Activated CD8-positive, alpha-beta T cell treated with anti-CD3 and anti-CD28 coated beads, Interleukin-2, amount 10 ng/mL, durations not matched to agents 7 days and 5 days (primary cell): ENCODE measurements at regions of chr2 and their contacts with region 1.

Region 1: GRCh38 chr2:189762551-189763298 is at the start of gene OSGEPL1:
- DNase-seq: peak; percentile 96
- ATAC-seq: peak; percentile 98
- H3K4me3 Mint-ChIP-seq: peak within 1 kb of the TSS; percentile 93
- H3K27ac Mint-ChIP-seq: peak within 1 kb of the TSS; percentile 98
- H3K4me1 Mint-ChIP-seq: peaks cover 15% of the 10 kb centered on the region
- H3K27me3 Mint-ChIP-seq: no peaks in the 10 kb centered on the region
- total RNA-seq, gene OSGEPL1: 8.0 to 8.5 TPM

Region 2: GRCh38 chr2:189661148-189661956 is 101.4 kb before region 1 on chr2 and contains the start of gene ASNSD1:
- CTCF ChIA-PET with region 1: interaction called, 100 read pairs
- POLR2A ChIA-PET with region 1: interaction called, 20 read pairs
- DNase-seq: peak; percentile 98
- ATAC-seq: peak; percentile 91
- H3K4me3 Mint-ChIP-seq: no peak within 1 kb of the TSS
- H3K27ac Mint-ChIP-seq: no peak within 1 kb of the TSS
- H3K4me1 Mint-ChIP-seq: peaks cover 48% of the 10 kb centered on the region
- H3K27me3 Mint-ChIP-seq: no peaks in the 10 kb centered on the region
- total RNA-seq, gene ASNSD1: 36.9 to 39.4 TPM

Region 3: DNA sequence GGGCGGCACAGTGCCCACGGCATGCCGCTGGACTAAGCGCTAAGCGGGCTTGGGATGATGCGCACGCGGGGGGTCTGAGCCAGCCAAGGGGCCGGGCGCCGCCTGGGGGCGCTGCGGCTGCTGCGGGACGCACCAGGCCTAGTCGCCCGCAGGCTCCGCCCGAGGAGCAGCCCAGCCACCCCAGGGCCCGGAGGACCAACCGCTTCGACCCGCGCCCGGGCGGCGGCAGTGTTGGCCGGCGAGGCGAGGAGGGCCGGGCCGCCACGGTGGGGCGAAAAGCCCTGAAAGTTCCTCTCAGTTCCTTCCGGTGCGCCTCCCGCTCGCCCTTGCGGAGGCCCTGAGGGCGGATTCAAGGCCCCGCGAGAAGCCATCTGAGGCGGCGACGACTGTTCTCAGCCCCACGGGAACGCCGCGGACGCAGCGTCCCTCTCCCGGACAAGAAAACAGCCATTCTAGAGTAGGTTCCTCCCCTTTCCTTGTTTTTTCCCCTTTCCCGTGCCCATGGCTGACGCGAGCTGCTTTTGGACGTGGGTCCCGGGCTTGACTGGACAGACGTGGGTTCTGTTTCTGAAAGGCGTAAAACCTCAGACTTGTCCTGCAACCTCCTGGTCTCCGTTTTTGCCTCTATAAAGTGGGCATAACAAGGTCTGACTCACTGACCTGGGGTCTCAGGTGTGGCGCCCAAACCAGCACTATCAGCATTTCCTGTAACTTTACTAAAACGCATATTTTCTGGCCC is 88.2 kb before region 1 on chr2 and contains the start of gene ANKAR:
- CTCF ChIA-PET with region 1: interaction called, 38 read pairs
- POLR2A ChIA-PET with region 1: interaction called, 4 read pairs
- DNase-seq: peak; percentile 77
- ATAC-seq: peak; percentile 97
- H3K4me3 Mint-ChIP-seq: peak within 1 kb of the TSS; percentile 88
- H3K27ac Mint-ChIP-seq: peak within 1 kb of the TSS; percentile 96
- H3K4me1 Mint-ChIP-seq: peaks cover 30% of the 10 kb centered on the region
- H3K27me3 Mint-ChIP-seq: no peaks in the 10 kb centered on the region
- total RNA-seq, gene ANKAR: 4.8 to 5.2 TPM

Region 4: GRCh38 chr2:189751080-189751658 is 11.6 kb before region 1 on chr2:
- CTCF ChIA-PET with region 1: interaction called, 67 read pairs
- POLR2A ChIA-PET with region 1: interaction called, 7 read pairs
- DNase-seq: peak; percentile 55
- ATAC-seq: peak; percentile 81
- H3K4me3 Mint-ChIP-seq: no peak overlapping the region
- H3K27ac Mint-ChIP-seq: no peak overlapping the region
- H3K4me1 Mint-ChIP-seq: no peaks in the 10 kb centered on the region
- H3K27me3 Mint-ChIP-seq: no peaks in the 10 kb centered on the region

Region 5: GRCh38 chr2:189783927-189784867 is 21.5 kb after region 1 on chr2 and contains the starts of genes ORMDL1 and PMS1:
- CTCF ChIA-PET with region 1: interaction called, 13 read pairs
- POLR2A ChIA-PET with region 1: interaction called, 22 read pairs
- DNase-seq: peak; percentile 95
- ATAC-seq: peak; percentile 97
- H3K4me3 Mint-ChIP-seq: peak within 1 kb of the TSS; percentile 91
- H3K27ac Mint-ChIP-seq: peak within 1 kb of the TSS; percentile 89
- H3K4me1 Mint-ChIP-seq: peaks cover 46% of the 10 kb centered on the region
- H3K27me3 Mint-ChIP-seq: no peaks in the 10 kb centered on the region
- total RNA-seq, gene ORMDL1: 59.4 to 61.0 TPM
- total RNA-seq, gene PMS1: 33.7 to 41.7 TPM

Region 6: DNA sequence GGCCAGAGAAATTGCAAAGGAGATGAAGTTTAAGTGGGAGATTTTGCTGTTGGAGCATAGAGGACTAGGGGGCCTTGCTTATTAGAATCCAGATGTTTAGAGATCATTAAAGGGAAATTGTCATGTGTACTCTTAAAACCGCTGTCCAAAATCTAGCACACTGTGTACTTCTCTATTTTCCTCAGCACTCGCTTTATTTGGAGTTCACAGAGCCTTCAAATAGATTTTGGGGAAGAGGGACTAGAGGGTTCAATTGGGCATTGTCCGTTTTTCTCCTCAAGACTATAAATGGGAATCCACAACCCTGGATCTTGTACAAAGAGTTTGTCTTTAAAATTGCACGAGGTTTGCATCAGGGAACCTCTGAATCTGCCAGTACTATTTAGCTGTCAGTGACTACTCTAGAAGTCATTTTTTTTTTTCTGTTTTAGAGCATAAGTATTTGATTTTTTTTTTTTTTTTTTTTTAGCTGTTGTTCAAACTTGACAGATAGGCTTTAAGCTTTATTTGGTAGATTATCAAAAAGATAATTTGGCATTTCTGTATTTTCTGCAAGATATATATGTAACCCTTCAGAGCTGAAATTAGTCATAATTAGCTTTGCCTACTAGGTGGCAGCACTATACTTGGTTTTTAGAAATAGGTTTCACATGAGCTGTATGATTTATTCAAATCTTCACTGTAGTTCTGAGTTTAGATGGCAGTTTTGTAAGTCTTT is 35.7 kb after region 1 on chr2:
- CTCF ChIA-PET with region 1: interaction called, 11 read pairs
- POLR2A ChIA-PET with region 1: no interaction called
- DNase-seq: no peak
- ATAC-seq: peak; percentile 57
- H3K4me3 Mint-ChIP-seq: no peak overlapping the region
- H3K27ac Mint-ChIP-seq: no peak overlapping the region
- H3K4me1 Mint-ChIP-seq: no peaks in the 10 kb centered on the region
- H3K27me3 Mint-ChIP-seq: no peaks in the 10 kb centered on the region

Region 7: GRCh38 chr2:190069936-190070696 is 307.4 kb after region 1 on chr2:
- CTCF ChIA-PET with region 1: no interaction called
- POLR2A ChIA-PET with region 1: no interaction called
- DNase-seq: peak; percentile 44
- ATAC-seq: no peak
- H3K4me3 Mint-ChIP-seq: no peak overlapping the region
- H3K27ac Mint-ChIP-seq: no peak overlapping the region
- H3K4me1 Mint-ChIP-seq: no peaks in the 10 kb centered on the region
- H3K27me3 Mint-ChIP-seq: peaks cover 11% of the 10 kb centered on the region